ENCODE measurements at regions of chr3 and their contacts with region 1.

Region 1: GRCh38 chr3:101195951-101196713 is 124.2 kb downstream of the IMPG2 start:
- ATAC-seq: peak; percentile 51 to 82 (median 63)
- H3K4me3 ChIP-seq: no peak overlapping the region
- H3K27ac ChIP-seq: no peak overlapping the region
- H3K4me1 ChIP-seq: peaks cover 6 to 23% of the 10 kb centered on the region in 2 donors

Region 2: DNA sequence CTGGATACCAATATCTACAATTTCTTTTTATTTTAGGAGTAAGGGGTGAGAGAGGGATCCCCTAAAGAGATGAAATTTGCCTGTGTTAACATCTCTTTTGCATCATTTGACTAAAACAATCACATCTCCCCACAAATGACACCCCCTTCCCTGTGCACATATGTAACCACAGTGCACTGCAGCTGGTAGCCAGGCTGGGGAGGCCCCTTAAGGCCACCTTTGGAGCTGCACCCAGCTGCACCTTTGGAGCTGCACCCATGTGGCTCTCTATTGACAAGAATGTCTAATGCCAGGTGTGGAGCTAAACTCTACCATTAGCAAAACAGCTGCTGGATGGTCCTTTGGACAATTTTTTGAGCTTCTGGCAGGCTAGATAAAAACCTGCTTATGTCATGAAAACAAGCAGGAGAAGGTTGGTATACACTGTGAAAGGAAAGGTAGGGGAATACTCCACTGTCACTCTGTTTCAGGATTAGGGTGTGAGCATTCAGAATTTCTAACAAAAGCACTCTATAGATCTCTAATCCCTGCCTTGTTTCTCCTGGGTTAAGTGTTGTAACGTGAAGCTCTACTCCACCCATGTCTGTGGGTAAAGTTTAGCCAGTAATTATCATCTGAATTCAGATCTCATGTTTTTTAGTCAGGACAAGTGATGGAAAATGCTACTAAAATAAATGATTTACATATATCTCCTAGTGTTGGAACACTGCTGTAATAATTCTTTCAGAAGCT is 434.8 kb before region 1 on chr3:
- in situ Hi-C with region 1: loop called in 1 of 9 experiments (anchors 25 kb)
- ATAC-seq: peak in 3 of 8 experiments; percentile 58 to 69 (median 59)
- H3K4me3 ChIP-seq: no peak overlapping the region
- H3K27ac ChIP-seq: no peak overlapping the region
- H3K4me1 ChIP-seq: no peaks in the 10 kb centered on the region

Region 3: GRCh38 chr3:100893590-100893989 is 302.5 kb before region 1 on chr3:
- in situ Hi-C with region 1: loop called in 1 of 9 experiments (anchors 25 kb)
- ATAC-seq: peak in 1 of 8 experiments; percentile 11
- H3K4me3 ChIP-seq: no peak overlapping the region
- H3K27ac ChIP-seq: no peak overlapping the region
- H3K4me1 ChIP-seq: no peaks in the 10 kb centered on the region

Measured in motor neuron (in vitro differentiated cells).